Panc1 (cell line): ENCODE measurements at regions of chr9 and their contacts with region 1.

Region 1: DNA sequence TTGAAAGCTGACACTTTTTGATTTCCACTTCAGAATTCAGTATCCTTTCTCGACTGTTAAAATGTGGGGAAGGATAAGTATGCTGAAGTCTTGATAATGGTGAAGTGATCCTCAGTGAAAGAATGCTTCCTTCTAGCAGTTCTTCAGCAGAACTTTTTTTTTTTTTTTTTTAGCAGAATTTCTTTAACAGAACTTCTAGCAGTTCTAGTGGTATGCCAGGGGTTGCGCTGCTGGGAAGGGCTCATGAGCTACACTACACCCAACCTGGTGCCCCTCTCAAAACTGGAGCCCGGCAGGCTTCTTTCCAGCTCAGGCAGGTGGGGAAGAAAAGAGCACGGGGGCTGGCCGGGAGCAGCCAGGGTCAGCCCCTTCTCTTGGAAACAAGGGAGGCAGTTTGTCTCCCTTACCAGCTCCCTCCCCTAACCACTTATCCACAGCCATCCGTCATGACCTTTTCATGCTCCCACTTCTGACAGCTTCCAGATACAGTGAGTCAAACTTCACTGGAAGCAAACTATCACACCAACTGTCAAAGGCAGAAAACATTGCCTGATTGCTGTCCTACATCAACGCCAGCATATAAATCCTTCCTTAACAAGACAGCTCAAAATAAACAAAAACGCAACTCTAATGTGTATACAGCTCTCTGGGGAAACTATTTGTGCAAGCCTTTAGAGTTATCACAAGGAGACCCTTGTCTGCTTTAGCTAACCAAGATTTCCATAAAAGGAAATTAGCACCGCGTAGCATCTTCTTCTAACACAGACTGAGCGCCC is 211.5 kb downstream of the GAPVD1 start:
- DNase-seq: no peak
- ATAC-seq: no peak
- H3K4me3 ChIP-seq: no peak overlapping the region
- H3K27ac ChIP-seq: no peak overlapping the region
- H3K4me1 ChIP-seq: no peaks in the 10 kb centered on the region; the same call in none of the 2 replicates
- H3K27me3 ChIP-seq: no peaks in the 10 kb centered on the region
- CTCF ChIP-seq: no peak

Region 2: GRCh38 chr9:125361837-125362531 is 111.1 kb before region 1 on chr9:
- CTCF ChIA-PET with region 1: no interaction called
- POLR2A ChIA-PET with region 1: no interaction called
- in situ Hi-C with region 1: no loop called
- intact Hi-C with region 1: no loop called
- DNase-seq: no peak
- ATAC-seq: no peak
- H3K4me3 ChIP-seq: no peak overlapping the region
- H3K27ac ChIP-seq: no peak overlapping the region
- H3K4me1 ChIP-seq: no peaks in the 10 kb centered on the region
- H3K27me3 ChIP-seq: no peaks in the 10 kb centered on the region
- CTCF ChIP-seq: peak; percentile 47

Region 3: GRCh38 chr9:125867751-125868415 is 394.8 kb after region 1 on chr9:
- CTCF ChIA-PET with region 1: no interaction called
- POLR2A ChIA-PET with region 1: interaction called, 10 read pairs
- in situ Hi-C with region 1: no loop called
- intact Hi-C with region 1: no loop called
- DNase-seq: no peak
- ATAC-seq: no peak
- H3K4me3 ChIP-seq: no peak overlapping the region
- H3K27ac ChIP-seq: no peak overlapping the region
- H3K4me1 ChIP-seq: no peaks in the 10 kb centered on the region
- H3K27me3 ChIP-seq: no peaks in the 10 kb centered on the region
- CTCF ChIP-seq: no peak